Ovary (tissue), 10 donors: ENCODE measurements at regions of chr4 and their contacts with region 1.

Region 1: GRCh38 chr4:40316782-40317635 is 18.1 kb upstream of the CHRNA9 start:
- DNase-seq: peak; percentile 46 to 70 (median 60)
- H3K4me3 ChIP-seq: peak overlapping the region; percentile 25
- H3K27ac ChIP-seq: peak overlapping the region in 1 of 2 donors; percentile 52
- H3K4me1 ChIP-seq: peaks cover 3% of the 10 kb centered on the region
- H3K27me3 ChIP-seq: no peaks in the 10 kb centered on the region
- CTCF ChIP-seq: peak; percentile 67 to 88 (median 83)
- EP300 ChIP-seq: no peak
- POLR2A ChIP-seq: no peak

Region 2: GRCh38 chr4:39201963-39202362 is 1115.0 kb before region 1 on chr4:
- intact Hi-C with region 1: no loop called
- DNase-seq: no peak
- H3K4me3 ChIP-seq: no peak overlapping the region
- H3K27ac ChIP-seq: no peak overlapping the region
- H3K4me1 ChIP-seq: no peaks in the 10 kb centered on the region
- H3K27me3 ChIP-seq: no peaks in the 10 kb centered on the region
- CTCF ChIP-seq: no peak
- EP300 ChIP-seq: no peak
- POLR2A ChIP-seq: no peak

Region 3: DNA sequence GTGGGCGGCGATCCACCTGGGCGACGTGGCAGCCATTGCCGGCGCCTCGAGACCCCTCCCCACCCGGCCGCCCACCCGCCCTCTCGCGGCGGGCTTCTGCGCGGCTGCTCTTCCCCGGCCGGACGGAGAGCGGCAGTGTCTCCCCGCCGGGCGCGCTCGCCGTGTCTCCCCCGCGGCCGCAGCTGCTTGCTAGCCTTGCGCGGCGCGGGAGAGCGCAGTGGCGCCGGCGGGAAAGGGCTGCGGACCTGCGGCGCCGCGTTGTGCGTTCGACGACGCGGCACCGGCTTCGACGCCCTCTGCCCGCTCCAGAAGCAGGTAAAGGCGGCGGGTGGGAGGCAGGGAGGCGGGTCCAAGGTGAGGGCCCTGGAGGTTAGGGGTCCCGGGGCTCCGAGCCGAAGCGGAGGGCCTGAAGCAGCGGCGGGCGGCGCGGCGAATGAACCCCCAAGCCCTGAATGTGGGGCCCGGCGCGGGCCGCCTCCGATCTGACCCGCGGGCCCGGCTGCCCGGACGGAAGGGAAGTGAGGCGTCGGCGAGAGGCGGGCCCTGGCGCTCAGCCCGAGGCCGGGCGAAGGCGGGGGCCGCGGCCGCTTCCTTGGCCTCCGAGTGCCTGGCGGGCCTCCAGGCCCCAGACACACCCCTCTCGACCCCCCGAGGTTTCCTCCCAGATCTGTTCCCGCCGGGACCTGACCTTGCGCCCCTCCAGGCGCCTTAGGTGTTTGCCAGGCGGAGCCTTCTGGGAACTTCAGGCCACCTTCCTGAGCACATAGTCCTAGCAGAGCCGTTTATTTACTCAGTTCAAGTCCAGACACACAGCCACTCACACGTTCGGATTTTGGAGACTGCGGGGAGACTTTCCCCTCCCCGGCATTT is 260.1 kb before region 1 on chr4 and contains the start of gene N4BP2:
- intact Hi-C with region 1: loop called in 3 of 4 experiments (anchors 5 to 10 kb)
- DNase-seq: peak; percentile 85 to 94 (median 88)
- H3K4me3 ChIP-seq: peak within 1 kb of the TSS; percentile 100
- H3K27ac ChIP-seq: peak within 1 kb of the TSS; percentile 97 to 98
- H3K4me1 ChIP-seq: peaks cover 3% of the 10 kb centered on the region
- H3K27me3 ChIP-seq: no peaks in the 10 kb centered on the region
- CTCF ChIP-seq: peak; percentile 56 to 83 (median 76)
- EP300 ChIP-seq: no peak
- POLR2A ChIP-seq: peak; percentile 80
- total RNA-seq, gene N4BP2: 9.7 to 21.3 (median 11.9) TPM